AG04450 (cell line): ENCODE measurements at regions of chr21 and their contacts with region 1.

Region 1: GRCh38 chr21:29477941-29478340 is 179.2 kb downstream of the BACH1 start:
- DNase-seq: no peak
- H3K4me3 ChIP-seq: no peak overlapping the region
- H3K27ac ChIP-seq: no peak overlapping the region
- H3K27me3 ChIP-seq: no peaks in the 10 kb centered on the region
- CTCF ChIP-seq: no peak

Region 2: DNA sequence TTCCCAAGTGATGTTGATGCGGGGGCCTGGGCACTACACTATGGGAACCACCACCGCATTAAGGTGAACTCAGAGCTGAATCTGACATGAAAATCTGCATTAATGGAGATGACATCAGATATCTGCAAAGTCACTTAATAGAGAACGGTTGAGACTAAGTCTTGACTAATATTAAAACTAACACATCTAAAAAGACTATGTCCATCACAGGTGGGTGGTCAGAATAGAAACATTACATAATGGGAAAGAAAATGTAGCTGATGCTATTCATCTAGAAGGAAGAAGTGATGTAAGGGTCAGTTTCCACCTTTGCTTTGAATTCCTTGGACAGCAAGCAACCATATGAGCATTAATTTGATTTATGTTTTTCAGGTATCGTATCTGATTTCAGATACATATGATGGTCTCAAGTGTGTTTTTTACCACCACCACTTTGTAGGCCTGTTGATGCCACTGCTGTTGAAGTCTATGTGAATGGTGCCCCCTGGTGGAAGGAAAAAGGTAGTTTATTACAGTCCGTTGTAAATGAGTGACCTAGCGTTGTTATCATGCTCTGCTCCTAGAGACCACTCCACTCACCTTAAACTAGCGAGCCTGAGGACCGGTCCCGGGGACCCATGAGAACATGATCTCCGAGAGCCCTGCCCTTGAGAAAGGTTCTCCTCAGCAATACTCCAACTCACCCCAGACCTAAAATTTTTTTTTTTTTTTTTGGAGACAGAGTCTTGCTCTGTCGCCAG is 105.7 kb before region 1 on chr21:
- CTCF ChIA-PET with region 1: interaction called, 11 read pairs
- POLR2A ChIA-PET with region 1: no interaction called
- DNase-seq: peak; percentile 66
- H3K4me3 ChIP-seq: no peak overlapping the region
- H3K27ac ChIP-seq: no peak overlapping the region
- H3K27me3 ChIP-seq: no peaks in the 10 kb centered on the region
- CTCF ChIP-seq: peak; percentile 70

Region 3: DNA sequence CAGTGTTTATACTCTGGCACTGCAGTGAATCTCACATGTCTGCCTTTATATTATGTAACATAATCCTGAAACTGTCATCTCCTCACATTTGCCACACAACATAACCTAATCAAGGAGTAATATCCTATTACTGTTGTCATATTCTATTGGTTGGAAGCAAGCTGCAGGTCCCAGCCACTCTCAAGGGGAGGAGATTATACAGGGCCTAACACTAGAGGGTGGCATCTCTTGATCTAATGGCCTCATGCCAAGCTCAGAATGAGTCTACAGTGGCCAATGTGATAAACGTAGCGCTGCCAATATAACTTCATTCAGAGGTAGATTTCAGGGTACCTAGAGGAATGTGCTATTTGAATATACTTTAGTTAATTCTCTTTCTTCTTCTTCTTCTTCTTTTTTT is 12.4 kb before region 1 on chr21:
- CTCF ChIA-PET with region 1: interaction called, 14 read pairs
- POLR2A ChIA-PET with region 1: no interaction called
- DNase-seq: no peak
- H3K4me3 ChIP-seq: no peak overlapping the region
- H3K27ac ChIP-seq: no peak overlapping the region
- H3K27me3 ChIP-seq: no peaks in the 10 kb centered on the region
- CTCF ChIP-seq: no peak

Region 4: DNA sequence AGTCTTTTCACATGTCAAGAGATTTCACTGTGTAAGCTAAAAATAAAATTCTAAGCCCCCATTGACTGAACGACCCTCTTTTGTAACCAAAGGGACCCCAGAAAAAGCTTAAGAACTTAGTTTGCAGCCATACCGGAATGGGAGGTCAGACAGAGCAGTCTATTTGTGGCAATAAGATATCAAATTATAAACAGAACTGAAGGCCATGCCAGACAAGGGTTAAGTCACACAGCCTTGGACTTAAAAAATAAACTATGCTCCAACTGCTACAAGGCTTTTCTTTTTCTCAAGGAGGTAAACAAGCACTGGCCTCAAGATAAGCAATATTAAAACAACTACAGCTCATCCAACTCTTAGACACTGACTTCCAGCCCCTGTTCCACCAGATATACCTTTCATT is 77.7 kb after region 1 on chr21:
- CTCF ChIA-PET with region 1: interaction called, 10 read pairs
- POLR2A ChIA-PET with region 1: no interaction called
- DNase-seq: no peak
- H3K4me3 ChIP-seq: no peak overlapping the region
- H3K27ac ChIP-seq: no peak overlapping the region
- H3K27me3 ChIP-seq: no peaks in the 10 kb centered on the region
- CTCF ChIP-seq: no peak

Region 5: DNA sequence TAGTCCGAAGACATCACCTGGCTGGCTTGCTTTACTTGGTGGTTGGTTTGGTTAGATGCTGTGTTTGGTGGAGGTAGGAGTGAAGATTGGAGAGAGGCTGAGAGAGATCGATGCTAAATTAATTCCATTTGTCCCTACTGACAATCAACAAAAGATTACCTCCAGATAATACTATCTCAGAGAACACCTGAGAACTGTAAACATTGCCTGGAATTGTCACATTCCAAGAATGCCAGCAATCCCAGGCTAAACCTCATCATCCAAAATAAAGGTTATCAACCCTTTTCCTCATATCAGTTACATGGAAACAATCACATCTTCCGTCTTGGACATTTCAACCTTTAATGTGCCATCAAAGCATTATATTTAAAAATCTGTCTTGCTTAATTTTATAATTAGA is 320.9 kb after region 1 on chr21:
- CTCF ChIA-PET with region 1: no interaction called
- POLR2A ChIA-PET with region 1: no interaction called
- DNase-seq: no peak
- H3K4me3 ChIP-seq: no peak overlapping the region
- H3K27ac ChIP-seq: no peak overlapping the region
- H3K27me3 ChIP-seq: no peaks in the 10 kb centered on the region
- CTCF ChIP-seq: no peak

Region 6: DNA sequence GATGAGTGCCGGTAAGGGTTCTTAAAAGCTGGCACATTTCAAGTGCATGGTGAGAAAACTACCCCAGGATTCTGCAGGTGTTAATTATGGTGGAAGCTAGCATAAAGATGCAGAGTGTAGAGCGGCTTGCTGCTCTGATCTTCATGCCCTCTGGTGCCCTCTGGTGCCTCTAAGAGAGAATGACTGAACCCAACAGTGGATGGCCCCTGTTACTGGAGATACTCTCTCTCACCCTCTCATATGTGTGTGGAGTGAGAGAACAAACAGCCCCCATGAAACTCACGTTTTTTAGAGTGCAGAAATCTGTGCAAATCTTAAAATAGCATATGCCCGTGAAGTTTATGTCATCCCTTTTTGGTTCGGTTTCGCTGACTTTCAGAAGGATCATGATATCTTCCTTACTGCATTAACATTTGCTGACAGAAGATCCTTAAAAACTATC is 371.8 kb after region 1 on chr21:
- CTCF ChIA-PET with region 1: interaction called, 35 read pairs
- POLR2A ChIA-PET with region 1: no interaction called
- DNase-seq: peak; percentile 15
- H3K4me3 ChIP-seq: no peak overlapping the region
- H3K27ac ChIP-seq: no peak overlapping the region
- H3K27me3 ChIP-seq: no peaks in the 10 kb centered on the region
- CTCF ChIP-seq: peak; percentile 90